AG04449 (cell line): ENCODE measurements at regions of chr11 and their contacts with region 1.

Region 1: GRCh38 chr11:94897330-94897768 is 76.0 kb downstream of the CWC15 start:
- DNase-seq: no peak
- H3K4me3 ChIP-seq: no peak overlapping the region
- CTCF ChIP-seq: peak; percentile 76

Region 2: GRCh38 chr11:94786264-94787126 is 110.9 kb before region 1 on chr11:
- CTCF ChIA-PET with region 1: interaction called, 29 read pairs
- POLR2A ChIA-PET with region 1: no interaction called
- DNase-seq: no peak
- H3K4me3 ChIP-seq: no peak overlapping the region
- CTCF ChIP-seq: peak; percentile 35

Region 3: DNA sequence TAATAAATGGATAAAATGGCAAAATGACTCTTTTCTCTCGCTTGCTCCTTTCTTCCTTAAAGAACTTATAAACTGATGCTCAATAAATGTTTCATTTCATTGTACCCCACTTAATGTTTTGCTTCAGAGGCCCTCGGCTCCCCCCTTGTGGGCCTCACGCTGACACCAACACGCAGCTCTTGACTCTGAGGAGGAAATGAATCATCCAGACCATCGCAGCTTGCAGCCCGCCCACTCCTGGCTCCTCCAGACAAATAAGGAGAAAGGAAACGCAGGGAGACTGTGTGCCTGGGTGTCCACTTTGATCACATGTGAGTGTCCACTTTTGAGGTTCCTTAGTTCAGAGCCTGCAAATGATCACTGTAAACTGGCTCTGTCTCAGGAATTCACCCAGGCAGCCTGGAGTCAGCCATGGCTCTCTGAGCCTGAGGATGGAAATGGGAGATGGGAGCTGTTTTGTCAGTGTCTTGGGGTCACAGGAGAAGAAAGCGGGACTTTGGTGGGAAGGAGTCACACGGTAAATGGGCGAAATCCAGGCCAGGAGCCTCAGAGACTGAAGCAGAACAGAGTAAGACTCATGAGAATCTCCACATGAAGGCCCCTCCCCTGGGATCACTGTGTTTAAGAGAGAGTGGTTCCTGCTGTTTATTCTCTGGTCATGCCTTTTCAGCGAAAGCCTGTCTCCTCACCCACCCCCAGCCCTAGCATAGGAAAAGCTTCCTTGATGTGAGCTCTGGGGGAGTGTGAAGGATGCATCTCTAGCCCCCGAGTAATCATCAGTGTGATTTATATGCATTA is 20.5 kb before region 1 on chr11:
- CTCF ChIA-PET with region 1: interaction called, 11 read pairs
- POLR2A ChIA-PET with region 1: no interaction called
- DNase-seq: peak; percentile 87
- H3K4me3 ChIP-seq: no peak overlapping the region
- CTCF ChIP-seq: peak; percentile 31

Region 4: DNA sequence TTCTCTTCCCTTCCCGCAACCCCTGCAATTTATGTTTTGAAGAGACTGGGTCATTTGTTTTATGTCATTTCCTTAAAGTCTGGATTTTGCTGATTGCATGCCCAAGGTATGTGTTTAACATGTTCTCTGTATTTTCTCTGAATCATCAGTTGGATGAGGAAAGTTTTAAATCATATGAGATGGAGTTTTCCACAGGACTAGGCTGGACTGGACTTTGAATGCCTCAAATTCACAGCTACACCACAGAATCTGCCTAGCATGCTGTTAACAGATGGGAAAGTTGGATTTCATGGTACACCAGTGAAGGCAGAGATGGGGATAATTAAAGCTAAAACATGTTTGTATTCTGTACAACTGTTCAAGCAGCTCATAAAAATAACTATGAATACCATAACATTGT is 13.4 kb after region 1 on chr11:
- CTCF ChIA-PET with region 1: interaction called, 30 read pairs
- POLR2A ChIA-PET with region 1: no interaction called
- DNase-seq: peak; percentile 84
- H3K4me3 ChIP-seq: no peak overlapping the region
- CTCF ChIP-seq: no peak

Region 5: GRCh38 chr11:94926698-94927237 is 29.4 kb after region 1 on chr11:
- CTCF ChIA-PET with region 1: interaction called, 13 read pairs
- POLR2A ChIA-PET with region 1: no interaction called
- DNase-seq: peak; percentile 79
- H3K4me3 ChIP-seq: no peak overlapping the region
- CTCF ChIP-seq: no peak